HepG2 (cell line): ENCODE measurements at regions of chr2 and their contacts with region 1.

Region 1: DNA sequence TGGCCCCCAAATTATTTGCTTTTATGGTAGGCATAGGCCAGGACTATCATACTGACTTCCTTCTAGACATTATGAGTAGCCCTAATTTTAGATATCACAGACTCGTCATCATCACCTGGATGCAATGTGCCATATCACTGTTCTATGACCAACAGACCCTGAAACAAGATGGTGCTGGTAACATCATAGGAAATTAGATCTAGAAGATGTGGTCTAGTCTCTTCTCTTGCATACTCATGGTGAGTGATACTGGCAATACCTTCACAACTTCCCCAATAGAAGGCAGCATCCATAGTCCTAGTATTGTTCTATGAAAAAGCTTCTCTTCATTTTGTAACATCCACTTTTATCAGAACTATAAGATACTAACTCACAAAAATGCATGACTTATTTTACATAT is 116.3 kb upstream of the ITGA4 start:
- DNase-seq: no peak
- ATAC-seq: no peak
- H3K4me3 ChIP-seq: no peak overlapping the region
- H3K27ac ChIP-seq: no peak overlapping the region
- H3K4me1 ChIP-seq: no peaks in the 10 kb centered on the region
- H3K27me3 ChIP-seq: no peaks in the 10 kb centered on the region; a peak in 1 of 5 replicates
- CTCF ChIP-seq: no peak
- EP300 ChIP-seq: no peak
- POLR2A ChIP-seq: no peak
- RAD21 ChIP-seq: no peak

Region 2: GRCh38 chr2:179373816-179374215 is 1967.1 kb before region 1 on chr2:
- CTCF ChIA-PET with region 1: no interaction called
- POLR2A ChIA-PET with region 1: no interaction called
- in situ Hi-C with region 1: no loop called
- intact Hi-C with region 1: loop called (anchors 5 kb)
- DNase-seq: no peak
- ATAC-seq: no peak
- H3K4me3 ChIP-seq: no peak overlapping the region
- H3K27ac ChIP-seq: no peak overlapping the region
- H3K4me1 ChIP-seq: peaks cover 4% of the 10 kb centered on the region; the same call in 1 of the 2 replicates
- H3K27me3 ChIP-seq: no peaks in the 10 kb centered on the region; a peak in 1 of 5 replicates
- CTCF ChIP-seq: no peak
- EP300 ChIP-seq: no peak
- POLR2A ChIP-seq: no peak
- RAD21 ChIP-seq: no peak

Region 3: DNA sequence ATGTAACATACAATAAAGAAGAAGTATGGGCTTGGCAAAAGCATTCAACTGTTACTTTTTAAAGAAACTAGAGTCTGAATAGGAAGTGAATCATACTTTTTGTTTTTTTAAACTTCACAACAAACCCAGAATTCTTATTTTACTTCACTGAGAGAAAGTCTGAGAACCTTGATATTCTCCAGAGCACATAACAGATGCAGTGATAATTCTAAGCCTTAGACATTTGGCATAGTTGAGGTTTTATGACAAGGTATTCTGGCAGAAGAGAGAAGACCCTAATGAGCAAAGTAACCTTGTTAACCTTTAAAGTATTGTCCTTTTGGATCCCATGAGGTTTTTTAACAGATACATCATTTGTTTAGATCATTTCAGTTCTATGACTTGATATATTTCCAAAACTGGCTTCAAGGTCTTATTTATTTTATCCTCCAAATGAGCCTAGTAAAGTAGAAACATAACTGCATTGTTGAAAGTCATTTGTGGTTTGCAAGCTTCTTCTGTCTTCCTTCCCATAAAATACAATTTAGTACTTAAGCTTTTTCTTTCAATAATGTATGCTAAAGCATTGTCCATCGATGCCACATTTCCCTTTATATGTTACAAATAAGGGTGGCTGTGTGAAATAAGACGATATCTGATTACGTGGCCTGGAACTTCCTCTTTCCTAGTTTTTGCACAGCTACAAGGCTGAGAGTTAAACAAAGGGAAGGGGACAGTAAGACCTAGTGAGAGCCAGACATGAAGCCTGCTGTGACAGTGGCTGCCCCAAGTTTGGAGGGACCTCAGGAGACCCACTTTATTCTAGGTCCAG is 464.5 kb after region 1 on chr2:
- CTCF ChIA-PET with region 1: no interaction called
- POLR2A ChIA-PET with region 1: no interaction called
- in situ Hi-C with region 1: no loop called
- intact Hi-C with region 1: no loop called
- DNase-seq: no peak
- ATAC-seq: no peak
- H3K4me3 ChIP-seq: no peak overlapping the region
- H3K27ac ChIP-seq: no peak overlapping the region
- H3K4me1 ChIP-seq: peaks cover 28% of the 10 kb centered on the region
- H3K27me3 ChIP-seq: no peaks in the 10 kb centered on the region
- CTCF ChIP-seq: no peak
- EP300 ChIP-seq: no peak
- POLR2A ChIP-seq: no peak
- RAD21 ChIP-seq: no peak